Endothelial cell of umbilical vein (primary cell): ENCODE measurements at regions of chr9 and their contacts with region 1.

Region 1: DNA sequence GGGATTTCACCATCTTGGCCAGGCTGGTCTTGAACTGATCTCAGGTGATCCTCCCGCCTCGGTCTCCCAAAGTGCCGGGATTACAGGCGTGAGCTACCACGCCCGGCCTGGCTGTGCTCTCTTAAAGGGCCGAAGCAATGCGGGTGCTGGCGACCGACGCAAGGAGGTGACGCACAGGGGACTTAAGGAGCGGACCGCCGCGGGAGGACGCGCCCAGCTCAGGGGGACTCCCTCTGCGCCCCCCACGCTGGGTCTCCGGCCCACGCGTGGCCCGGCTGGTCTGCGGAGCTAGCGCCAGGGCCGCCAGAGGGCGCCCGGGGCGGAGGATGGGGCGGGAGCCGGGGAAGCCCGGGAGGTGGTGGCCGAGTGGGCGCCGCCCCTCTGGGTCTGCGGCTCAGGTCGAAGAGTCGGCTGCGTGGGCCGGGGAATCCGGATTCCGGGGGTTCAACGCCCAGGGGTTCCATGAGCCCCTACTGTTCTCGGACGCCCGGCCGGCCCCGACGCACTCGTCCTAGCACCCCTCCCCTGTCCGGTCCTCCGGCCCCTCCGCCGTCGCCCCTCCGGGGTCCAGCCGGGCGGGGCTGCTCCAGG is 502 bp upstream of the CERCAM start:
- DNase-seq: peak; percentile 63
- H3K4me3 ChIP-seq: peak overlapping the region; percentile 53 to 65 (median 59)
- H3K27ac ChIP-seq: no peak overlapping the region
- H3K4me1 ChIP-seq: peaks cover 13% of the 10 kb centered on the region
- H3K27me3 ChIP-seq: peaks cover 6 to 9% of the 10 kb centered on the region in 2 experiments
- CTCF ChIP-seq: peak; percentile 85 to 89
- POLR2A ChIP-seq: peak; percentile 28

Region 2: GRCh38 chr9:128310461-128310860 is 109.7 kb before region 1 on chr9:
- CTCF ChIA-PET with region 1: no interaction called
- POLR2A ChIA-PET with region 1: no interaction called
- dilution Hi-C with region 1: no loop called
- intact Hi-C with region 1: no loop called
- DNase-seq: no peak
- H3K4me3 ChIP-seq: no peak overlapping the region
- H3K27ac ChIP-seq: no peak overlapping the region
- H3K4me1 ChIP-seq: peaks cover 6% of the 10 kb centered on the region
- H3K27me3 ChIP-seq: no peaks in the 10 kb centered on the region
- CTCF ChIP-seq: no peak
- POLR2A ChIP-seq: no peak

Region 3: DNA sequence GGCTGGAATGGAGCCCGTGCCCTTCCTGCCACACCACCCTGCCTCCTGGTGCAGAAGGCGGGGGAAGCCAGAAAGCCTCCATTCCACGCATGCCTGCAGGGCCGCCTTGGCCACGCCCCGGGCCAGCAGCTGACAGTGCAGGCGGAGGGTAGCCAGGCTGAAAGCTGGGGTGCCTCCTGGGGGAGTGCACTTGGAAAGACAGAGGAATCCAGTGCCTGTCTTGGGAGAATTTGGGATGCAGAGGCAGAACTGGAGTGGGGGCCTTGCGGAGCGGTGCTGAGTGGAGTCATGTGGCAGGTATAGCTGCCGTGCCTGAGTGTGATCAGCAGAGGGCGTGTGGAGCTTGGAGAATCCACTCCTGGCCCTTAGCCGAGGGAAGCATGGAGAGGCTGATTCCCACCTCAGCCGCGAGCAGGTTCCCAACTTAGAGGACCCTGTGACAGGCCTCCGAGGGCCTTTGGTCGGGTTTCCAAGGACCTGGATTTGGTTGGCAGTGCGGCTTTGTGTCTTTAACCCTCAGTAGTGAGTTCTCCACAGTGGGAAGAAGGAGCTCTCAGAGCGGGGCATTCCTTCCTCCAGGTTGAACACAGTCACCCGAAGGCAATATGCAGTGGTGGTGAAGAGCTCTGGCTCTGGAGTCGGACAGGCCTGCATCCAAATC is 58.0 kb before region 1 on chr9:
- CTCF ChIA-PET with region 1: interaction called, 108 read pairs
- POLR2A ChIA-PET with region 1: no interaction called
- dilution Hi-C with region 1: no loop called
- intact Hi-C with region 1: loop called (anchors 2 kb)
- DNase-seq: peak; percentile 87
- H3K4me3 ChIP-seq: peak overlapping the region in 2 of 3 experiments; percentile 37 to 48
- H3K27ac ChIP-seq: no peak overlapping the region
- H3K4me1 ChIP-seq: peaks cover 17% of the 10 kb centered on the region
- H3K27me3 ChIP-seq: no peaks in the 10 kb centered on the region
- CTCF ChIP-seq: peak; percentile 79 to 92
- POLR2A ChIP-seq: peak; percentile 66

Region 4: GRCh38 chr9:128383007-128383753 is 37.0 kb before region 1 on chr9:
- CTCF ChIA-PET with region 1: interaction called, 12 read pairs
- POLR2A ChIA-PET with region 1: no interaction called
- dilution Hi-C with region 1: no loop called
- intact Hi-C with region 1: no loop called
- DNase-seq: no peak
- H3K4me3 ChIP-seq: no peak overlapping the region
- H3K27ac ChIP-seq: no peak overlapping the region
- H3K4me1 ChIP-seq: no peaks in the 10 kb centered on the region
- H3K27me3 ChIP-seq: no peaks in the 10 kb centered on the region
- CTCF ChIP-seq: no peak
- POLR2A ChIP-seq: no peak

Region 5: GRCh38 chr9:128396970-128397613 is 23.1 kb before region 1 on chr9:
- CTCF ChIA-PET with region 1: interaction called, 10 read pairs
- POLR2A ChIA-PET with region 1: no interaction called
- dilution Hi-C with region 1: no loop called
- intact Hi-C with region 1: no loop called
- DNase-seq: peak; percentile 24
- H3K4me3 ChIP-seq: peak overlapping the region in 1 of 3 experiments; percentile 8
- H3K27ac ChIP-seq: no peak overlapping the region
- H3K4me1 ChIP-seq: peaks cover 5% of the 10 kb centered on the region
- H3K27me3 ChIP-seq: no peaks in the 10 kb centered on the region
- CTCF ChIP-seq: no peak
- POLR2A ChIP-seq: no peak